AG04449 (cell line): ENCODE measurements at regions of chr10 and their contacts with region 1.

Region 1: GRCh38 chr10:89029785-89030437 is 39.3 kb downstream of the FAS start:
- DNase-seq: peak; percentile 29
- H3K4me3 ChIP-seq: no peak overlapping the region
- CTCF ChIP-seq: peak; percentile 75

Region 2: DNA sequence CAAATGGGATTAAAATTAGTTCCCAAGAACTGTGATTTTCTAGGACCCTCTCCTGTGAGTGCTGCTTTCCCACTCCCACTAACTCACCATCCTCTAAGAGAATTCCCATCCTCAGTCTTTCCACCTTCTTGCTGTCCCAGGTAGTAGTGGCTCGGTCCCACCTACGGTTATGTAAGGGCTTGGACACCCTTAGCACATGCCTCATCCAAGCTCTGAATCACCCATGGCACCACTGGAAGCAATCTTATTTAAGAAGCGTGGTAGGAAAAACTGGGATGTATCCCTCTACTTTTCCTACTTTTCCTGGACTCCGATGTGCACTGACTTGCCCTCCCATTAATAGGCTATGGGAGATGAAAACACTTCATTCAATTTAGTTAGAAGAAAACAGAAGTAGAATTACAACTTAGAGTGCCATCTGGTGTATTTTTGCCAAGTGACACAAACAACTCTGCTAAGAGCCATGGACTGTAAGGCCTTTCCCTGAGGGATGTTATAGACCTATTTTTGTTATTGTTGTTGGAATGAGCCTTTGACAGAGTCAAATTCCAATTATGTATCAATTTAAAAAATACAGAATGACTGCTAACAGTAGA is 164.5 kb before region 1 on chr10:
- CTCF ChIA-PET with region 1: no interaction called
- POLR2A ChIA-PET with region 1: no interaction called
- DNase-seq: no peak
- H3K4me3 ChIP-seq: no peak overlapping the region
- CTCF ChIP-seq: no peak

Region 3: DNA sequence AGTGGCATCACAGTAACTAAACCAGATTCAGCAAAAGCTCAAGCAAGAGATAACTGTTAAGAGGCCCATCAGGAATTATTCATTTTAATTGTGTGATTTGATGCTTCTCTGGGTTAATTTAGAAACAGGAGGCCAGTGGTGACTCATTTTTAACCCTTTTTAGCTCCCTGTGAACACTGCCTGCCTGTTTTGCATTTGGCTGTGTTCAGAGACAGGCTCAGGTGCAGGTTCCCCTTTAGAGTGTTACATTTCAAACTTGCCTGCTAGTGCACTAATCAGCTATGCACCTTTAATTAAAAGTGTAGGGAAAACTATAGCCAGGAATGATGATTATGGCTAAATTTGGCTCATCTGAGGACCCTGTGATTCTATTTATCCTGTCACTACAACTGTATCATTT is 143.4 kb before region 1 on chr10:
- CTCF ChIA-PET with region 1: no interaction called
- POLR2A ChIA-PET with region 1: no interaction called
- DNase-seq: no peak
- H3K4me3 ChIP-seq: no peak overlapping the region
- CTCF ChIP-seq: no peak

Region 4: DNA sequence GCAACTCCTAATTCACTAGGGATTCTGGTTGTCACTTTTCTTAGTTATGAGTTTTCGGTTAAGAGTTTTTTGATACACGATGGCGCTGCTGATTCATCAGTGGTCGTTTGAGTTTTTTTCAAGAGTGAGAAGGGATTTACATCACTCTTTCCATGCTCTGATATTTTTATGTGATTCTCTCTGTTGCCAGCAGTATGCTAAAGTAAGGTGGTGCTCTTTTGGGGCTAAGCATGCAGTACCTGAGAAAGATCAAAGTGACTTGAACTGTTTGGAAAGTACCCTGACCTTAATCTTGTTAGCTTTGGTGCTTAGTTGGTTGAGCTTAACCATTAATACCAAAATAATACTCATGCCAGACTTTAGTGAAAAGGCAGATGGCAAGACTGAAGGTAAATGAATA is 121.7 kb before region 1 on chr10:
- CTCF ChIA-PET with region 1: no interaction called
- POLR2A ChIA-PET with region 1: no interaction called
- DNase-seq: no peak
- H3K4me3 ChIP-seq: no peak overlapping the region
- CTCF ChIP-seq: no peak

Region 5: GRCh38 chr10:89001024-89001728 is 28.7 kb before region 1 on chr10:
- CTCF ChIA-PET with region 1: interaction called, 10 read pairs
- POLR2A ChIA-PET with region 1: no interaction called
- DNase-seq: no peak
- H3K4me3 ChIP-seq: no peak overlapping the region
- CTCF ChIP-seq: no peak

Region 6: DNA sequence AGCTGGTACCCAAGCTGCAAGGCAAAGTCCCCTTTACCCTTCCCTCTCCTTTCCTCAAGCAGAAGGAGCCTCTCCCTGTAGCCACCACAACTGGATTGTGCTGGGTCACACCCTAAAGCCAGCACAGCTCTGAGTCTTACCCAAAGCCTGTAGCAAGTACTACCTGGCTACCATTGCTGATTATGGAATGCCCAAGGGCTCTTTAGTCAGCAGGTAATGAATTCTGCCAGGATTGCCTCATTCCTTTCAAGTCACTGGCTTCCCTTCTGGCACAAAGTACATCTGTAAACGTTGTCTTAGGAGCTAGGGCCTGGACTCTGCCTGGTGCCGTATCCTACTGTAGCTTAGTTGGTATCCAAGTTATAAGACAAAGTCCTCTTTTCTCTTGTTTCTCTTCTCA is 12.7 kb after region 1 on chr10:
- CTCF ChIA-PET with region 1: interaction called, 24 read pairs
- POLR2A ChIA-PET with region 1: no interaction called
- DNase-seq: no peak
- H3K4me3 ChIP-seq: no peak overlapping the region
- CTCF ChIP-seq: no peak

Region 7: GRCh38 chr10:89207181-89207800 is 177.4 kb after region 1 on chr10 and contains the start of gene CH25H:
- CTCF ChIA-PET with region 1: interaction called, 166 read pairs
- POLR2A ChIA-PET with region 1: interaction called, 6 read pairs
- DNase-seq: no peak
- H3K4me3 ChIP-seq: peak within 1 kb of the TSS; percentile 66
- CTCF ChIP-seq: no peak

Region 8: DNA sequence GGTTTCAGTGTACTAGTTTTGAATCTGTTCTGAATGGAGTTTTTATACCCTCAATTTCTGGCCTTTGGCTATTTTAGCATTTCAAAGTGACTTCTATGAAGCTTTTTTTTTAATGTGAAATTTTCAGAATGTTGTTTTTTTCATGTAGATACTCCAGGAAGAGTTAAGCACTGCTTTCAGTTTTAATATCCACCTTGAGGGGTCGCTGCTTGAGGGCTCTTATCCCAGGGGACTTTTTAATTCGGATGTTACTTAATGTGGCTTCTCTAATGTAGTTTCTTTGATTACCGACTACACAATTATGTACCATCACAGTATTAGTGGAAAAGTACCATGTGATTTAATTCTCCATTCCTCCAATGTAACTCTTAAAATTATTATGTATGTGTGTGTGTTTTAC is 389.6 kb after region 1 on chr10:
- CTCF ChIA-PET with region 1: no interaction called
- POLR2A ChIA-PET with region 1: no interaction called
- DNase-seq: no peak
- H3K4me3 ChIP-seq: no peak overlapping the region
- CTCF ChIP-seq: peak; percentile 14